ENCODE measurements at regions of chr3 and their contacts with region 1.

Region 1: DNA sequence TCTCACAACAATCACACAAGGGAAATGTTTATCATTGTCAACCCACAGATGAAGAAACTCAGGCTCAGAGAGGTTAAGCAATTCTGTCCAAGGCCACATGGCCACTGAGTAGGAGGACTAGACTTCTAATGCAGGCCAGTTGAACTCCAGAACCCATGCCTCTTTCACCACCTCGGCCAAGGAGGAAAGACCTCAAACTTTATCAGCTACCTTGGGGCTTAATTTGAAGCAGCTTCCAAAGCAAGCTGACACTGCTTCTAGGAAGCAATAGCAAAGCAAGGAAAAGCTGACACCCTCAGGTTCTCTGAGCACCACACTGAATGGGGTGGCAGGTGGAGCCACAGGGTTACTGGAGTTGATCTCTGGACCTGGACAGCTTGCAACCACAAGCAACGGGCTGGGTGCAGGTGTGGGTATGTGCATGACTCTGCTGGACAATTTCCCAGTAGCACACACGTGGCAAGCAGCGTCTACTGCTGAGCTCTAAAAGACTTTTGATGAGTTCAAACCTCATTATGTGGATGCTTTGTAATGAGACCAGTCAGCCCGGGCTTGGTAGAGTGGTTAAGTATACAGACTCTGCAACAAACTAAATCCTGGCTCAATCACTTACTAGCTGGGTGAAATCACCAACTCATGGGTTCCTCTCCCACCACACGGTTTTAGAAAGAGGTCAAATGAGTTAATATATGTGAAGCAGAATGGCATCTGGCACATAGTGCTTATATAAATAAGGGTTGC is 23.1 kb downstream of the CCNL1 start:
- DNase-seq: peak; percentile 52
- ATAC-seq: peak; percentile 5; the same call in 1 of the 2 replicates
- H3K4me3 ChIP-seq: no peak overlapping the region
- H3K27ac ChIP-seq: peak overlapping the region; percentile 8; the same call in 1 of the 2 replicates
- H3K4me1 ChIP-seq: peaks cover 20% of the 10 kb centered on the region
- H3K27me3 ChIP-seq: no peaks in the 10 kb centered on the region
- CTCF ChIP-seq: no peak
- POLR2A ChIP-seq: no peak
- RAD21 ChIP-seq: no peak

Region 2: DNA sequence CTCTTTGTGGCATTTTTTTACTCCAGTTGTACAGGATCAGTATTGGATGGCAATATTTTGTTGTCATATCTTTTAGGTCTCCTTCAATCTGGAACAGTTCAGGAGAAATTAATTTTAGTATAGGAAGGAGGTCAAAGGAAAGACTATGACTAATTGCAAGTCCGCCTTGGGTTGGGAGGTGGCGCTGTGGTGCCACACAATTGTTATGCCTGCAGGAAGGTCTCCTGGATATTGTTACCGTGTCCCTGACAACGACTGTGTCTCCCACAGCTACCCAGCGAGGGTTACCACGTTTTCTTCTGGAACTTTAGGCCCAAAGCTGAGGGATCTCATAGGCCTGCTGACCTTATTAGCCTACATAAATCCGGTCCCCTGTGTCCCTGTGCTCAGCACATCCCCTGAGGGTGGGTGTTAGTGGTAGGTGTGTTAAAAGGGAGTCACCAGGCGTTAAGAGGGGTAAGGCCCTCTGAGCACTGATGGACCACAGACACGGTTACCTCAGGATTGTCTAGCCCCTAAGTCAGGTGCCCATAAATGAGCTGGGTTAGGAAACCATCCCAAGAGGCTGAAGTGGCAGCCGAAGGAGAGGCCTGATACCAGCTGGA is 984.9 kb before region 1 on chr3:
- CTCF ChIA-PET with region 1: interaction called, 4 read pairs
- POLR2A ChIA-PET with region 1: no interaction called
- dilution Hi-C with region 1: no loop called
- in situ Hi-C with region 1: loop called (anchors 10 kb)
- intact Hi-C with region 1: loop called (anchors 2 kb)
- DNase-seq: peak; percentile 69
- ATAC-seq: peak; percentile 76
- H3K4me3 ChIP-seq: no peak overlapping the region
- H3K27ac ChIP-seq: no peak overlapping the region
- H3K4me1 ChIP-seq: peaks cover 3% of the 10 kb centered on the region
- H3K27me3 ChIP-seq: peaks cover 4% of the 10 kb centered on the region
- CTCF ChIP-seq: peak; percentile 90
- POLR2A ChIP-seq: no peak
- RAD21 ChIP-seq: peak; percentile 85

Region 3: GRCh38 chr3:156547637-156548036 is 589.2 kb before region 1 on chr3:
- CTCF ChIA-PET with region 1: interaction called, 3 read pairs
- POLR2A ChIA-PET with region 1: no interaction called
- dilution Hi-C with region 1: no loop called
- in situ Hi-C with region 1: loop called (anchors 5 kb)
- intact Hi-C with region 1: loop called (anchors 5 kb)
- DNase-seq: peak; percentile 56
- ATAC-seq: no peak
- H3K4me3 ChIP-seq: no peak overlapping the region
- H3K27ac ChIP-seq: peak overlapping the region; percentile 49; the same call in 1 of the 2 replicates
- H3K4me1 ChIP-seq: peaks cover 14% of the 10 kb centered on the region
- H3K27me3 ChIP-seq: no peaks in the 10 kb centered on the region
- CTCF ChIP-seq: no peak
- POLR2A ChIP-seq: no peak
- RAD21 ChIP-seq: no peak

Region 4: GRCh38 chr3:156674046-156674910 is 462.5 kb before region 1 on chr3 and contains the start of gene TIPARP:
- CTCF ChIA-PET with region 1: interaction called, 5 read pairs
- POLR2A ChIA-PET with region 1: no interaction called
- dilution Hi-C with region 1: no loop called
- in situ Hi-C with region 1: no loop called
- intact Hi-C with region 1: loop called (anchors 2 kb)
- DNase-seq: peak; percentile 96
- ATAC-seq: peak; percentile 94
- H3K4me3 ChIP-seq: peak within 1 kb of the TSS; percentile 71
- H3K27ac ChIP-seq: peak within 1 kb of the TSS; percentile 62
- H3K4me1 ChIP-seq: peaks cover 7% of the 10 kb centered on the region
- H3K27me3 ChIP-seq: no peaks in the 10 kb centered on the region
- CTCF ChIP-seq: peak; percentile 58
- POLR2A ChIP-seq: peak; percentile 99
- RAD21 ChIP-seq: peak; percentile 59
- total RNA-seq, gene TIPARP: 70.8 and 76.4 TPM in 2 replicates

Region 5: GRCh38 chr3:156816091-156816799 is 320.6 kb before region 1 on chr3:
- CTCF ChIA-PET with region 1: no interaction called
- POLR2A ChIA-PET with region 1: no interaction called
- dilution Hi-C with region 1: no loop called
- in situ Hi-C with region 1: no loop called
- intact Hi-C with region 1: no loop called
- DNase-seq: peak; percentile 79
- ATAC-seq: peak; percentile 4
- H3K4me3 ChIP-seq: peak overlapping the region; percentile 17
- H3K27ac ChIP-seq: peak overlapping the region; percentile 83
- H3K4me1 ChIP-seq: peaks cover 28% of the 10 kb centered on the region
- H3K27me3 ChIP-seq: no peaks in the 10 kb centered on the region
- CTCF ChIP-seq: no peak
- POLR2A ChIP-seq: no peak
- RAD21 ChIP-seq: no peak; the same call in 1 of the 2 replicates

Region 6: DNA sequence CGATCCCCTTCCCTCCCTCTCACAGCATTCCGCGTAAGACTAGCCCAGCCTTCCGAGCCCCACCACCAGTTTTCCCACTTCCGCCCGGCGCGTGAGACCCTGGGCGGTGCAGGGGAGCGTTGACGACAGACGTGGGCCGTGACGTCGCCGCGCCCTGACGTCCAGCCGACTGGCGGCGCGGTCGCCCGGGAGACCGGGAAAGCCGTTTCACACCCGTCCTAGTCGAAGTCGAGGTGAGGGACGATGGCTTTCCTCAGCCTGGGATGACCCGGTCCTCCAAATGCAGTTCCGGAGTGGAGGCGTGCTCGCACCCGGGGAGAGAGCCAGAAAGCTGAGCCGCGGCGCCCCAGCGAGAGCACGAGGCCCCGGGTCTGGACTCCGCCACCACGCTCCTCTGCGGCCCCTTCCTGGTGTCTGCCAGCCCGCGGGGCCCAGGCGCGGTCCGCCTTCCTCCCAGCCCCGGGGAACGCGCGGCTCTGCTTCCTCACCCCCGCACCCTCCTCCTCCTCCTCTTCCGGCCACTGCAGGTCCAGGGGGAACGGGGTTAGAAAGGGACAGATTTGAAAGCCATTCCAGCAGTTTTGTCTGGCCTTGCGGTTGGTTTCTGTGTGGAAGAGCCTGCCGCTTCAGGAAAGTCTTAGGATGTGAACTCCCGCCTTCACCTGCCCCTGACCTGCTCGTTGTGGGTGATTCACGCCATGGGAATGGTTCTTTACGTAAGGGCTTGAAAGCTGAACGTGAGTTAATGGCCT is 310.5 kb before region 1 on chr3 and contains the start of gene LEKR1:
- CTCF ChIA-PET with region 1: no interaction called
- POLR2A ChIA-PET with region 1: no interaction called
- dilution Hi-C with region 1: no loop called
- in situ Hi-C with region 1: loop called (anchors 5 kb)
- intact Hi-C with region 1: no loop called
- DNase-seq: peak; percentile 98
- ATAC-seq: peak; percentile 90
- H3K4me3 ChIP-seq: peak within 1 kb of the TSS; percentile 53
- H3K27ac ChIP-seq: peak within 1 kb of the TSS; percentile 92
- H3K4me1 ChIP-seq: no peaks in the 10 kb centered on the region
- H3K27me3 ChIP-seq: no peaks in the 10 kb centered on the region
- CTCF ChIP-seq: no peak
- POLR2A ChIP-seq: peak; percentile 63; the same call in 1 of the 2 replicates
- RAD21 ChIP-seq: no peak; the same call in none of the 2 replicates
- total RNA-seq, gene LEKR1: 0.36 and 0.56 TPM in 2 replicates

Region 7: GRCh38 chr3:157081681-157082210 is 55.1 kb before region 1 on chr3:
- CTCF ChIA-PET with region 1: interaction called, 14 read pairs
- POLR2A ChIA-PET with region 1: no interaction called
- dilution Hi-C with region 1: no loop called
- in situ Hi-C with region 1: no loop called
- intact Hi-C with region 1: loop called (anchors 2 kb)
- DNase-seq: peak; percentile 94
- ATAC-seq: peak; percentile 97
- H3K4me3 ChIP-seq: no peak overlapping the region
- H3K27ac ChIP-seq: no peak overlapping the region
- H3K4me1 ChIP-seq: peaks cover 15% of the 10 kb centered on the region
- H3K27me3 ChIP-seq: no peaks in the 10 kb centered on the region
- CTCF ChIP-seq: peak; percentile 96
- POLR2A ChIP-seq: peak; percentile 82
- RAD21 ChIP-seq: peak; percentile 98